Activated naive CD4-positive, alpha-beta T cell treated with anti-CD3 and anti-CD28 coated beads for 36 hours (primary cell): ENCODE measurements at regions of chr17 and their contacts with region 1.

Region 1: DNA sequence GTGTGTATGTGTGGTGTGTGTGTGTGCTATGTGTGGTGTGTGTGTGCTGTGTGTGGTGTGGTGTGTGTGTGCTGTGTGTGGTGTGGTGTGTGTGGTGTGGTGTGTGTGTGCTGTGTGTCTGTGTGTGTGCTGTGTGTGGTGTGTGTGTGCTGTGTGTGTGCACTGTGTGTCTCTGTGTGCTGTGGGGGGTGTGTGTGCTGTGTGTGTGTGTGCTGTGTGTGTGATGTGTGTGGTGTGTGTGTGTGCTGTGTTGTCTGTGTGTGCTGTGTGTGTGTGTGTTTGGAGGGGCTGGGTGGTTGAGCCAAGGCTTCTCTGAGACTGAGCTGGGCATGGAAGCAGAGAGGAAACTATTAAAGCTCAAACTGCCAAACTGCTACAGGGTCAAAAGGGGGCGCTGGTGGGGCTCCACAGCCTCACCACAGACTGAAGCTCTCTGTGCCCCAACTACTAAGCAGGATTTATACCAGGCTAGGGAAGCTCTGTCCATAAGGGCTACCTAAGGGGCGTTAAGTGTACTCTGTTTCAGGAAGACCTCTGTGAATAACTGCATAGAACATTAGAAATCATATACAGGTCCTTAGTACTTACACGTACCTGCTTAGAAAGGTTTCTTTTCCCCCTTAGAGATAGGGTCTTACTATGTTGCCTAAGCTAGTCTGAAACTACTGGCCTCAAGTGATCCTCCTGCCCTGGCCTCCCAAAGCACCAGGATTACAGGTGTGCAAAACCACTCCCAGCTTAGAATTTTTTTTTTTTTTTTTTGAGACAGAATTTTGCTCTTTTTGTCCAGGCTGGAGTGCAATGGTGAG is 27.8 kb upstream of the GHDC start:
- DNase-seq: peak; percentile 73
- H3K4me3 Mint-ChIP-seq: no peak overlapping the region
- H3K27ac Mint-ChIP-seq: peak overlapping the region; percentile 6
- H3K4me1 Mint-ChIP-seq: peaks cover 2% of the 10 kb centered on the region
- H3K27me3 Mint-ChIP-seq: no peaks in the 10 kb centered on the region

Region 2: GRCh38 chr17:42174126-42174783 is 47.9 kb before region 1 on chr17:
- CTCF ChIA-PET with region 1: no interaction called
- intact Hi-C with region 1: no loop called
- DNase-seq: no peak
- H3K4me3 Mint-ChIP-seq: no peak overlapping the region
- H3K27ac Mint-ChIP-seq: no peak overlapping the region
- H3K4me1 Mint-ChIP-seq: peaks cover 4% of the 10 kb centered on the region
- H3K27me3 Mint-ChIP-seq: peaks cover 1% of the 10 kb centered on the region

Region 3: DNA sequence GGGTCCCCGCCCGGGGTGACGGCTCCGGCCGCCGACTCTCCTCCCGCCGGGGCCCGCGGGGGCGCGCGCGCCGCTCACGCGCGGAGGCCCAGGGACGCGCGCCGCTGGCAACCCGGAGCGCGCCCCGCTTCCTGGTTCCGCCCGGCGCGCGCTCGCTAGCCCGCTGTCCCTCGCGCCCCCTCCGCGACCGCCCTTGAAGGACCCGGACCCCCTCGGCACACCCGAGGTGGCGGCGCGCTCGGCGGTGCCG is 54.1 kb after region 1 on chr17 and contains the start of gene STAT5B:
- CTCF ChIA-PET with region 1: interaction called, 25 read pairs
- intact Hi-C with region 1: loop called (anchors 2 kb)
- DNase-seq: peak; percentile 62
- H3K4me3 Mint-ChIP-seq: peak within 1 kb of the TSS; percentile 96
- H3K27ac Mint-ChIP-seq: peak within 1 kb of the TSS; percentile 97
- H3K4me1 Mint-ChIP-seq: peaks cover 35% of the 10 kb centered on the region
- H3K27me3 Mint-ChIP-seq: no peaks in the 10 kb centered on the region
- total RNA-seq, gene STAT5B: 185 to 192 TPM

Region 4: GRCh38 chr17:42287926-42288802 is 66.0 kb after region 1 on chr17 and contains the start of gene STAT5A:
- CTCF ChIA-PET with region 1: interaction called, 41 read pairs
- intact Hi-C with region 1: loop called (anchors 1 kb)
- DNase-seq: peak; percentile 88
- H3K4me3 Mint-ChIP-seq: peak within 1 kb of the TSS; percentile 86
- H3K27ac Mint-ChIP-seq: peak within 1 kb of the TSS; percentile 95
- H3K4me1 Mint-ChIP-seq: peaks cover 68% of the 10 kb centered on the region
- H3K27me3 Mint-ChIP-seq: no peaks in the 10 kb centered on the region
- total RNA-seq, gene STAT5A: 165 to 174 TPM

Region 5: GRCh38 chr17:42294469-42295398 is 72.6 kb after region 1 on chr17:
- CTCF ChIA-PET with region 1: interaction called, 41 read pairs
- intact Hi-C with region 1: loop called (anchors 1 kb)
- DNase-seq: no peak
- H3K4me3 Mint-ChIP-seq: no peak overlapping the region
- H3K27ac Mint-ChIP-seq: peak overlapping the region; percentile 76
- H3K4me1 Mint-ChIP-seq: peaks cover 42% of the 10 kb centered on the region
- H3K27me3 Mint-ChIP-seq: no peaks in the 10 kb centered on the region

Region 6: DNA sequence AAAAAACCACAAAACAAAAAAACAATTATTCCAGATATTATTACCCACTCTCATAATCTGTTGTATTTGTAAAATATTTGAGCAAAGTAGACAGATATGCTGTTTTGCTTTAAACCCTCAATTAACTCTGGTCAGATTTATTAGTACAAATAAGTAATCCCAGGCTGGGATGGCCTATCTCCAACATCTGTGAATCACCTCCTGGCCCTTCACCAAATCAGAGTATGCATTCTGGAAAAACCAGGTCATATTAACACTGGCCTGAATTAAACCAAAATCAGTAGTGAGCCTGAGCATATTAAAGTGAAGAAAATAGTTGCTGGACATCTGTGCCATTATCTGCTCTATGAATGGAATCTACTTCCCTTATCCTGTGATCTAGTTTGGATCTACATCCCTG is 125.1 kb after region 1 on chr17:
- CTCF ChIA-PET with region 1: no interaction called
- intact Hi-C with region 1: no loop called
- DNase-seq: no peak
- H3K4me3 Mint-ChIP-seq: no peak overlapping the region
- H3K27ac Mint-ChIP-seq: no peak overlapping the region
- H3K4me1 Mint-ChIP-seq: peaks cover 51% of the 10 kb centered on the region
- H3K27me3 Mint-ChIP-seq: no peaks in the 10 kb centered on the region